Psoas muscle (tissue), 8 donors: ENCODE measurements at regions of chr1 and their contacts with region 1.

Region 1: GRCh38 chr1:185129708-185130107 is 27.0 kb downstream of the TRMT1L start:
- DNase-seq: no peak
- ATAC-seq: no peak
- H3K4me3 ChIP-seq: no peak overlapping the region
- H3K27ac ChIP-seq: no peak overlapping the region
- H3K4me1 ChIP-seq: no peaks in the 10 kb centered on the region
- H3K27me3 ChIP-seq: no peaks in the 10 kb centered on the region
- CTCF ChIP-seq: no peak

Region 2: GRCh38 chr1:184716158-184716557 is 413.6 kb before region 1 on chr1:
- intact Hi-C with region 1: loop called in 1 of 2 experiments (anchors 10 kb)
- DNase-seq: no peak
- ATAC-seq: no peak
- H3K4me3 ChIP-seq: no peak overlapping the region
- H3K27ac ChIP-seq: no peak overlapping the region
- H3K4me1 ChIP-seq: no peaks in the 10 kb centered on the region
- H3K27me3 ChIP-seq: no peaks in the 10 kb centered on the region
- CTCF ChIP-seq: no peak